ENCODE measurements at regions of chr21 and their contacts with region 1.

Region 1: DNA sequence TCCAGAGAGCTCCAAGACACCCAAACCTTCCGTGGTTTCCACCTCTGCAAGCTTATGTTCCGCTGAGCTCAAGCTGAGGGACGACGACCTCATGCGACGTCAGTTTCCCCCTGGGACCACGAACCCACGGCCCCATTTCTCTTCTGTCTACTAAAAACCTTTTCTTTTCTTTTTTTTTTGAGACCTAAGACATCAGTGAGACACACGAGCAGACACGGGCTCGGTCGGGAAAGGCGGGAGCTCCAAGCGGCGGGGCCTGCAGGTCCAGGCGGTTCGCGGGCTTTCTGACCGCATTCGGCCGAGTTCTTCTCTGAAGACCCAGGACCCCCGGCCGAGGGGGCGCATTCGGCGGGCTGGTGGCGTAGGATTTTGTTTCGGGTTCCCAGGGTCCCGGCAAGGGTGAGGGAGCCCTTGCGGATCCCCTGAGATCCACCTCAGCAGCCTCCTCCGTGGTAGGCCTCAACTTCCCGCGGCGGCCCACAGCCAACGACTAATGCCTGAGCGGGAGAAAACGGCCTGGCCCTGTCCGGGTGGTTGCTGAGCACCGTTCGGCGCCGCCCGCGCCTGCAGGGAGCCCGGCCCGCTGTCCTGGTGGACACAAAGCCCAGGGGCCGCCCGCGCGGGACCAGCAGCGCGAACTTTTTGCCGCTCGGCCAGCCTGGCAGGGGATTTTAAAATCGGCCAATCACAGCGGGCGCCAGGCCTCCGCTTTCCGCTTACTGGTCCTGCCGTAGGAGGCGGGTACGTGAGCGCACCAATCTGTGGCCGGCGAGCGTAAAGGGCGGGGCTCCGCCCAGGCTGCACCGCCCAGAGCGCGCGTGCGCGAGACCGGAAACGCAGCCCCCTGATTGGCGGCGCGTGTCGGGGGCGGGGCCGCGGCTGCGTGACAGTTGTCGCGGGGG is at the start of gene C21orf58:
- DNase-seq: peak; percentile 98 to 100 (median 99)
- ATAC-seq: peak; percentile 93 to 97 (median 96)
- H3K4me3 ChIP-seq: peak within 1 kb of the TSS; percentile 77 to 100 (median 96)
- H3K27ac ChIP-seq: peak within 1 kb of the TSS; percentile 92 to 100 (median 98)
- H3K4me1 ChIP-seq: peaks cover 4 to 37% (median 19%) of the 10 kb centered on the region in 12 donors
- H3K27me3 ChIP-seq: no peaks in the 10 kb centered on the region
- CTCF ChIP-seq: peak in 2 of 12 donors; percentile 4 to 12
- POLR2A ChIP-seq: no peak
- total RNA-seq, gene C21orf58: 0.72 to 4.0 (median 1.3) TPM

Region 2: DNA sequence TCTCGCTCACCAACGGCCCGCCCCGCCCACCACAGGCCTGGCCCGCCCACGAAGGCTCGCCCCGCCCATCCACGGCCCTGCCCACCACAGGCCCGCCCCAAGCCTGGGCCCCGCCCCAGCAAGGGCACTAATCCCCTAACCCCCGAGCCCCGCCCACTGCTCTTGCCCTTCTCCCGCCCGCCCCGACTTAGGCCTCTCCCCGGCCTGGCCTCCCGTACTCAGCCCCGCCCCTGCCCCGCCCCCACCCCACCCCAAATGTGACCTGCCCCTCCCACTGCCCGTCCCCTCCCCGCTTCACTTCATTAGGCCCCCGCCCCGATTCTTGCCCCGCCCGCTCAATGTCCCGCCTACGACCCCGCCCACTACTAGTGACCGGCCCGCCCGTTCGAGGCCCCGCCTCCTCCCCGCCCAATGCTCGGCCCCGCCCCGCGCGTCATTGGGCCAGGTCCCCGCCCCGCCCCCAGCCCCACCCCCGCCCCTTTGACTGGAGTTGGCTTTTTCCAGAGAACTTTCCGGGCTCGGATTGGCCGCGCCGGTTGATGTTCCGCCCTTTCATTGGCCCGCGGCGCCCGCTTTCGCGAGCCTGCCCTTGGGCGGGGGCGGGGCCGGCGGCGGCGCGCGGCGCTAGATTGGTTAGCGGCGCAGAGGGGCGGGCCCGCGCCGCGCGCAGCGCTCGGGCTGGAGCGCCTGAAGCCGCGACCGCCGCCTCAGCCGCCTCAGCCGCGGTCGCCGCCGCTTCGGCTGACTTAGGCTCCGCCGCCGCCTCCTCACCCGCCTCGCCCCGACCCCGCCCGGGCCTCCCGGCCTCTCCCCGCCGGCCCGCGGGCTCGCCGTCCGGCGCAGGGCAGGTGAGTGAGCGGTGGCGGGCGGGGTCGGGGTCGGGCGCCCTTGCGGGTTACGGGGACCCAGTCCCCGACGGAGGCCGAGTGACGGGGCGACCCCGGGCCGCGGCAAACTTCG is 680.2 kb before region 1 on chr21 and contains the start of gene PCBP3:
- intact Hi-C with region 1: loop called in 1 of 10 experiments (anchors 10 kb)
- DNase-seq: peak; percentile 92 to 98 (median 97)
- ATAC-seq: peak; percentile 93 to 95 (median 94)
- H3K4me3 ChIP-seq: peak within 1 kb of the TSS in 11 of 12 donors; percentile 11 to 64 (median 54)
- H3K27ac ChIP-seq: peak within 1 kb of the TSS in 4 of 12 donors; percentile 6 to 64 (median 46)
- H3K4me1 ChIP-seq: peaks cover 0 to 31% (median 2%) of the 10 kb centered on the region in 12 donors
- H3K27me3 ChIP-seq: peaks cover 0 to 27% (median 11%) of the 10 kb centered on the region in 9 donors
- CTCF ChIP-seq: no peak
- POLR2A ChIP-seq: peak in 1 of 2 donors; percentile 56
- total RNA-seq, gene PCBP3: 0.87 to 11.4 (median 2.9) TPM in 8 of 9 donors, not detected in the other

Region 3: GRCh38 chr21:46184625-46185555 is 138.6 kb before region 1 on chr21:
- intact Hi-C with region 1: loop called in 1 of 10 experiments (anchors 5 kb)
- DNase-seq: peak; percentile 77 to 94 (median 92)
- ATAC-seq: peak; percentile 59 to 76 (median 65)
- H3K4me3 ChIP-seq: peak overlapping the region; percentile 32 to 93 (median 66)
- H3K27ac ChIP-seq: peak overlapping the region; percentile 72 to 97 (median 88)
- H3K4me1 ChIP-seq: peaks cover 6 to 45% (median 22%) of the 10 kb centered on the region in 12 donors
- H3K27me3 ChIP-seq: no peaks in the 10 kb centered on the region
- CTCF ChIP-seq: no peak
- POLR2A ChIP-seq: no peak

Region 4: DNA sequence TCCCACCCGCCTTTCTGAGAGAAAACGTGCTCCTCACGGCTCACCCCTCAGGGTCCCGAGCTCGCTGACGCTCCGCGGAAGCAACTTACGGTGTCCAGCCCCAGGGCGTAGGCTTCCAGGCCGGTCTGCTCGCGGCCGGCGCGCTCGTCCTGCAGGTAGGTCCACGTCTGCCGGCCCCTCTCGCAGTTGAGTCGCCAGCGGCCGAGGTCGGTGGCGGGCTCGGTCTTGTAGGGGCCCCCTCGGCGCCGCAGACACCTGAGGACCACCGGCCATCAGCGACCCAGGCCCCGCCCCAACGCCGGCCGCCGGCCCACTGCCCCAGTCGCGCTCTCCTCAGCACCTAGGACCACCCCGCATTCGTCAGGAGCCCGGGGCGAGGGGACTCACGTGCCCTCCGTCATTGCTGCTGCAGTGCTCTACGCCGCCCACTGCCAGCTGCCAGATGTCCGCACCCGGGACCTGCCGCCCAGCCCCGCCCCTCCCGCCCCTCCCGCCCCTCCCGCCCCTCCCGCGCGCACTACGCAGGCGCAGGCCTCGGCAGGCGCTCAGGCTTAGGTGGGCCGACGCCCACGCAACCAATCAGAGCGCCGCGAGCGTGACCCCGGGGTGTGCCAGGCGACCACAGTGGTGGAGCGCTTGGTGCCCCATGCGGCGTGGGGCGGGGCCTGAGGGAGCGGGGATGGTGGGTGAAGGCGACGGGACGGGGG is 95.0 kb before region 1 on chr21 and contains the start of gene LSS:
- intact Hi-C with region 1: loop called in 2 of 10 experiments (anchors 5 to 10 kb)
- DNase-seq: peak; percentile 97 to 100 (median 99)
- ATAC-seq: peak; percentile 95 to 98 (median 97)
- H3K4me3 ChIP-seq: peak within 1 kb of the TSS; percentile 63 to 99 (median 95)
- H3K27ac ChIP-seq: peak within 1 kb of the TSS; percentile 62 to 91 (median 84)
- H3K4me1 ChIP-seq: peaks cover 0 to 47% (median 23%) of the 10 kb centered on the region in 12 donors
- H3K27me3 ChIP-seq: no peaks in the 10 kb centered on the region
- CTCF ChIP-seq: no peak
- POLR2A ChIP-seq: peak in 1 of 2 donors; percentile 64
- total RNA-seq, gene LSS: 34.2 to 65.5 (median 41.7) TPM

Region 5: GRCh38 chr21:46285761-46286496 is 37.5 kb before region 1 on chr21 and contains the start of gene YBEY:
- intact Hi-C with region 1: loop called in 9 of 10 experiments (anchors 1 to 5 kb)
- DNase-seq: peak; percentile 91 to 95 (median 93)
- ATAC-seq: peak; percentile 95 to 98 (median 98)
- H3K4me3 ChIP-seq: peak within 1 kb of the TSS; percentile 70 to 99 (median 89)
- H3K27ac ChIP-seq: peak within 1 kb of the TSS; percentile 85 to 99 (median 98)
- H3K4me1 ChIP-seq: peaks cover 0 to 69% (median 49%) of the 10 kb centered on the region in 12 donors
- H3K27me3 ChIP-seq: no peaks in the 10 kb centered on the region
- CTCF ChIP-seq: peak in 9 of 12 donors; percentile 15 to 63 (median 41)
- POLR2A ChIP-seq: peak in 1 of 2 donors; percentile 72
- total RNA-seq, gene YBEY: 11.4 to 28.1 (median 16.0) TPM

Measured in heart left ventricle (tissue), 16 donors.